ENCODE measurements at regions of chr6 and their contacts with region 1.

Region 1: DNA sequence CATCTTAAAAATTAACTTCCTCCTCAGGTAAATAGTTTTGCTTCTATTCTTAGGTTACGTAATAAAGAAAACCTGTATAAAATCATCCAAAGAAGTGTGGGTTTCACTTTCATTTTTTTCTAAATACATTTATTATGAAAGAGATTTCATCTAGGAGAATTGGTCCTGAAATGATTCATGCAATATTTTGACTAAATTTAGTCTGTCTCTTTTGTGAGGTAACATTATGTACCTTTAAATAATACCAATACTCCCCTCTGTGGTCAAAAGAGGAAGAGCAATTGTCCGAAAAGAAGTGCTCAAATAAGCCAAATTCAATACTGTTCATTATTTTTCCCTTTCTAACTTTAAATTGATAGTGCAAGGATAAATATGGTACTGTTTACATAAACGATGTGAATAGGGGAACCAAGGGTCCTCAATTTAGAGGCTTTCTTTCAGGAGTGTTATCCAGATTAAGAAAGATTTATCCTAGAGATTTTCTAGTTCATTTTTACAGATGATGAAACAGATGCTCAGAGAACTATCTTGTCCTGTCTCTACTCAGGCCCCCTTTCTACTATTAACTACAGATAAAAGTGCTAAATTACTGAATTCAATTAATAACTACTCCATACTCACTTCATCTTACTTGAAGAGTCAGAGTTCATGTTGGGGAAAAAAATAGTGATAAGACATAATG is 26.2 kb downstream of the CYP39A1 start:
- DNase-seq: no peak
- H3K4me3 ChIP-seq: peak overlapping the region; percentile 26 to 29
- H3K27ac ChIP-seq: peak overlapping the region; percentile 32 to 34
- H3K4me1 ChIP-seq: peaks cover 0 to 11% (median 6%) of the 10 kb centered on the region in 4 donors
- H3K27me3 ChIP-seq: no peaks in the 10 kb centered on the region
- CTCF ChIP-seq: peak; percentile 65 to 88

Region 2: GRCh38 chr6:46090115-46091079 is 536.0 kb before region 1 on chr6:
- intact Hi-C with region 1: loop called (anchors 10 kb)
- DNase-seq: peak; percentile 41 to 67
- H3K4me3 ChIP-seq: no peak overlapping the region
- H3K27ac ChIP-seq: no peak overlapping the region
- H3K4me1 ChIP-seq: no peaks in the 10 kb centered on the region
- H3K27me3 ChIP-seq: peaks cover 0 to 6% of the 10 kb centered on the region in 2 donors
- CTCF ChIP-seq: peak; percentile 73 to 76

Region 3: GRCh38 chr6:46357591-46357990 is 268.8 kb before region 1 on chr6:
- intact Hi-C with region 1: no loop called
- DNase-seq: no peak
- H3K4me3 ChIP-seq: no peak overlapping the region
- H3K27ac ChIP-seq: no peak overlapping the region
- H3K4me1 ChIP-seq: peaks cover 0 to 56% (median 10%) of the 10 kb centered on the region in 4 donors
- H3K27me3 ChIP-seq: no peaks in the 10 kb centered on the region
- CTCF ChIP-seq: no peak

Region 4: GRCh38 chr6:46419576-46420002 is 206.8 kb before region 1 on chr6:
- intact Hi-C with region 1: loop called (anchors 5 kb)
- DNase-seq: peak; percentile 63 to 76
- H3K4me3 ChIP-seq: no peak overlapping the region
- H3K27ac ChIP-seq: peak overlapping the region; percentile 50 to 53
- H3K4me1 ChIP-seq: peaks cover 0 to 65% (median 13%) of the 10 kb centered on the region in 4 donors
- H3K27me3 ChIP-seq: no peaks in the 10 kb centered on the region
- CTCF ChIP-seq: peak; percentile 74 to 75

Region 5: GRCh38 chr6:46437671-46438221 is 188.6 kb before region 1 on chr6:
- intact Hi-C with region 1: loop called (anchors 5 kb)
- DNase-seq: no peak
- H3K4me3 ChIP-seq: no peak overlapping the region
- H3K27ac ChIP-seq: peak overlapping the region; percentile 77 to 83
- H3K4me1 ChIP-seq: peaks cover 9 to 91% (median 31%) of the 10 kb centered on the region in 4 donors
- H3K27me3 ChIP-seq: no peaks in the 10 kb centered on the region
- CTCF ChIP-seq: no peak

Region 6: GRCh38 chr6:46491628-46492547 is 134.5 kb before region 1 on chr6:
- intact Hi-C with region 1: loop called (anchors 10 kb)
- DNase-seq: peak; percentile 44 to 84
- H3K4me3 ChIP-seq: peak overlapping the region; percentile 73 to 88
- H3K27ac ChIP-seq: peak overlapping the region; percentile 96 to 97
- H3K4me1 ChIP-seq: peaks cover 0 to 49% (median 11%) of the 10 kb centered on the region in 4 donors
- H3K27me3 ChIP-seq: no peaks in the 10 kb centered on the region
- CTCF ChIP-seq: peak; percentile 66 to 83

Region 7: GRCh38 chr6:46510651-46511050 is 115.7 kb before region 1 on chr6:
- intact Hi-C with region 1: no loop called
- DNase-seq: peak; percentile 70 to 79
- H3K4me3 ChIP-seq: no peak overlapping the region
- H3K27ac ChIP-seq: peak overlapping the region; percentile 73 to 83
- H3K4me1 ChIP-seq: peaks cover 0 to 86% (median 48%) of the 10 kb centered on the region in 4 donors
- H3K27me3 ChIP-seq: no peaks in the 10 kb centered on the region
- CTCF ChIP-seq: no peak

Measured in tibial artery (tissue), 4 donors.